OCI-LY7 (cell line): ENCODE measurements at regions of chr2 and their contacts with region 1.

Region 1: DNA sequence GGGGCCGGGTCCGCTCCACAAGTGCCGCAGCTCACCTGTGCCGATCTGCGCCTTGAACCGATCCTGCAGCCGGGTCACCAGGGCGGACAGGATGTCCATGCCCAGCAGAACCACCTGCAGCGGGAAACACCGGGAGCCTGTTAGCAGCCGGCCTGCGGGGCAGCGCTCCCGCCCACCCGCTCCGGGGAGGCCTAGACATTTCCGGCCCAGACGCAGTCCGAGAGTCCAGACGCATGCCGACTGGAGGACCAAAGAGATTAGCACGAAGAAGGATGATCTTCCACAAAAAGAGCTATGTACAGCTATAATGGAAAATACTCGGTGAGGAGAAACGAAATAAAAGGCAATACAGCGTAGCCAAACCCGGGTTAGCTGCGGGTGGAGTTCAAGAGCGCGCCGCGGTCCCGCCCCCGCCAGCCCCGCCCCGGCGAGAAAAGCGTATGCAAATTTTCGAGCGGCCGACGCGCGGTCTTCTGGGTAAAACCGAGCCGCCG is 421 bp upstream of the RNU4ATAC start:
- DNase-seq: peak; percentile 85
- H3K4me3 ChIP-seq: peak overlapping the region; percentile 92
- H3K27ac ChIP-seq: peak overlapping the region; percentile 94
- H3K4me1 ChIP-seq: peaks cover 37% of the 10 kb centered on the region
- CTCF ChIP-seq: no peak

Region 2: DNA sequence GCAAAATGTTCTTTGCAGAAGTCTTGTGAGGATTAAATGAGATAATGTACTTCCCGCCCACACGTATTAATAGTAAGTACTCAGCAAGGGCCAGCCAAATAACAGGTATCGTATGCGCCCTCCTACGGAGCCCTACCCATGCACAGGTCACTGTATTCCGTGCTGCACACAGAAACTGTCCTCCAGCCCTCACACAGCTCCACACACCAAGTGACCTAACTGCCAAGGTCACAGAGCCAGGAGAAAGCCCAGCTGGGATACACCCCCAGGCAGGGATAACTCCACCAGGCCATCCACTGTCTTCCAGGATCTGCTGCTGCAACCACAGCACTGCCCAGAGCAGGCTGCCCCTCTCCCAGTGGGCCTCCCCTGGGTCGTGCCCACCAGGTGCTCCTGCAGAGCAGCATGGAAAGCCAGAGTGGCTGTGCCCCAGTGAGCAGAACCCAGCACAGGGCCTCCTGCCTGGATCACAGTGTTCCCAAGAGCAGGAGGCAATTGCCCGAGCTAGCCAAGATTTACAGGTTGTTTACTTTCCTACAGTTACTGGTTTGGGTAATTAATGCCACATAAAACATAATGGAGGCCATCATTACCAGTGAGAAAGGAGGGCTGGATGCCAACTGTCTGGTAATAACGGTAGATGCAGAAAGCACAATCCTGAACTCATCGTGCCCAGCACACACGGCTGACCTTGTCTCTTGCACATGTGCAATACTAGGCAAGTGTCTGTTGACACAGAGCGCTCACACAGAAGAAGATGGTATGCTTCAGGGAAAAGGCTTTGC is 269.7 kb before region 1 on chr2:
- CTCF ChIA-PET with region 1: no interaction called
- POLR2A ChIA-PET with region 1: no interaction called
- intact Hi-C with region 1: no loop called
- DNase-seq: no peak
- H3K4me3 ChIP-seq: no peak overlapping the region
- H3K27ac ChIP-seq: no peak overlapping the region
- H3K4me1 ChIP-seq: no peaks in the 10 kb centered on the region
- CTCF ChIP-seq: no peak

Region 3: DNA sequence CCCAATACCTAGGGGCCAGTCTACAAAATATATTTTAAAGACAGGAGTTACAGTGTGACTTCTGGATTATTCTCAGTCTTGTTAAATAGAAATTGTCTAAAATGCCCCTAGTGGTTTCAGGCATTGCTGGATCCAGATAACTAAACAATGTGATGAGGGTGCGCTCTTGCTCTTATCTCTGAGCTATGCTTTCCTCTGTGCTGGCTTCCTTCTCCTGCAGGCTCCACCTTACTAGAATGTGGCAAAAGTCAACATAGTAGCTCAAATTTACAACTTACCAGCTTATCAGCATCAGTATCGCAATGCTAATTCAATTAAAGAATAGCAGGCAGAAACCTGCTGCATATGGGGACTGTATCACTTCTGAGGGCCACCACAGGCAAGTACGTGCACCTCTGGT is 60.9 kb before region 1 on chr2:
- CTCF ChIA-PET with region 1: no interaction called
- POLR2A ChIA-PET with region 1: no interaction called
- intact Hi-C with region 1: no loop called
- DNase-seq: no peak
- H3K4me3 ChIP-seq: no peak overlapping the region
- H3K27ac ChIP-seq: no peak overlapping the region
- H3K4me1 ChIP-seq: no peaks in the 10 kb centered on the region
- CTCF ChIP-seq: no peak

Region 4: DNA sequence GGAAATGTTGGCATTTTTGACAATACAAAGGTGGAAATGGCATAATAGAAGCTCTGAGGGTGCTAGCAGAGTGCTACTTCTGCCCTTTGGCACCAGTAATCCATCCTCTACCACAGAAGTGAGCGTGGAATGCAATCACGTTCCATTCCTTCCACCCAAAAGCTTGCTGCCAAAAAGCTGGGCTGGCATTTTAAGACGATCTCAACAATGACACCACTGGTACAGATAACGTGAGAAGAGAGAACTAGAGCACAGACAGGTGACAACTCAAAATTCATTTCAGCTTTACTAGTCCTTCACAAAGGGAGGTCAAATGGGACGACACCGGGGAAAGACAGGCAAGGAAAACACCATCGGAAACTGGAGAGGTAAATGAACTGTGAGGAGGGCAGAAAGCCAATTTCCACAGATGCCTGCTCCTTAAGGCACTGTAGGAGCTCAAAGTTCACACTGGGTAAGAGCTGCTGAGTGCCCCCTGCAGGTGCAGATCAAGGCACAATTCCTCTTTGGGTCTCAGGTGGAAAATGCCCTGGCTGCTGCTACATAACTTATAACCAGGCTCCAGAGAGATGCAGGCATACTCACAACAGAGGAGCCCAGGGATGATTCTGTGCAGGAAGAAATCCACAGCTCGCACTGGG is 50.3 kb before region 1 on chr2:
- CTCF ChIA-PET with region 1: no interaction called
- POLR2A ChIA-PET with region 1: no interaction called
- intact Hi-C with region 1: no loop called
- DNase-seq: peak; percentile 5
- H3K4me3 ChIP-seq: no peak overlapping the region
- H3K27ac ChIP-seq: no peak overlapping the region
- H3K4me1 ChIP-seq: peaks cover 8% of the 10 kb centered on the region
- CTCF ChIP-seq: peak; percentile 61

Region 5: DNA sequence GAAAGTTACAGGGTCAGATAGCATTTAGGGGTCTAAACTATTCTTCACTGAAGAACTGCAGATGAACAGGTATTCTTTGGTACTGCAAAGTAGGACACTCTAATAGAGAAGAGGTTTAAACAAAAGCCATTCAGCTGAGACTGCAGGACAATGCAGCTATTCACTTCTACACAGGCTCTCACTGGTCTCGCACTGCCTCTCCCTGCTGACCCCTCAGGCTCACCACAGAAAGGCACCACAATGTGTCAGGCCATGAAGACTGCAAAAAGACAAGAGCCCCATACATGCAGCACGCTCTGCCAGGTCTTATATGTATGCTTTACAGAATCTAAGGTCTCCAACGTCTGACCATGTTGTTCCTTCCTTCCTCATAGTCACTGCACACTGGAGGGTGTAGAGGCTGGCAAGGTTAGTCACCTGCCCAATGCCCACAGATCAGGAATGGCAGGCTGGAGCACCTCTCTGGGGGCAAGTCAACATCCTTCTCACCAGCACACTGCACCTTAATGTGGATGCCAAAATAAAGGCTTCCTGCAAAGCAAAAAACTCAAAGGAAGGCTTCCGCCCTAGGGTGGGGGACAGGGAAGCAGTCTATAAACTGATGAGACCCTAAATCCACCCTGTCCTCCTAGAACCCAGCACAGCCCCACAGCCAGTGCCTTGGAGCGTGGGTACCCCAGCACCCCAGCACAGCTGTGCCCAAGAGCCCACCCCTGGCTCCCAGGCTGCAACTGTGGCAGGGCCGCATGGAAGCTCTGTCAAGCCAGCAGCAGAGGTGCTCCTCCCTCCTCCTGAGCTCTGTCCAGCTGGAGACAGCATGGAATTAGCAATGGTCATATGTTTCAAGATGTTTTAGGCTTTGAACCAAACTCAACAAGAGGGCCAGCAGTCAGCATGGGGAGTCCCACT is 10.3 kb before region 1 on chr2:
- CTCF ChIA-PET with region 1: no interaction called
- POLR2A ChIA-PET with region 1: interaction called, 14 read pairs
- intact Hi-C with region 1: no loop called
- DNase-seq: no peak
- H3K4me3 ChIP-seq: no peak overlapping the region
- H3K27ac ChIP-seq: no peak overlapping the region
- H3K4me1 ChIP-seq: no peaks in the 10 kb centered on the region
- CTCF ChIP-seq: no peak

Region 6: GRCh38 chr2:121596221-121597080 is 66.2 kb after region 1 on chr2:
- CTCF ChIA-PET with region 1: interaction called, 5 read pairs
- POLR2A ChIA-PET with region 1: interaction called, 24 read pairs
- intact Hi-C with region 1: loop called (anchors 1 kb)
- DNase-seq: peak; percentile 80
- H3K4me3 ChIP-seq: peak overlapping the region; percentile 60
- H3K27ac ChIP-seq: peak overlapping the region; percentile 85
- H3K4me1 ChIP-seq: peaks cover 36% of the 10 kb centered on the region
- CTCF ChIP-seq: peak; percentile 84

Region 7: DNA sequence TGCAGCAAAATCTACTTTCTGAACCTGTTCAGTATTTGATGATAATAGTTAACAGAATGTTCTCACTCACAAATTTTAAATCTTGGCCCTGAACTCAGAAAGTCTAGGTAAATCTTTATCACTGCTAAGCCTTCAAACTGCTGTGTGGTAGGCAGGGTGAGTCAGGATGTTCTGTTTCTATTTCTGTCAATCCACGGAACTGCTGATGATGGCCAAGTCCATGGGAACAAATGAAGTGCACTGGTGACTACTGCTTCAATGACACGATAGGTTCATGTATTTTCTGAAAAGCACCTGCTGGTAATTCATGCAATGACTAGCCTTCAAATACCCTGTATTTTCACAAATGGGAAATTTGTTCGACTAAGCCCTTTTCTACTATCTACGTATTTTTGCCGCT is 192.2 kb after region 1 on chr2:
- CTCF ChIA-PET with region 1: no interaction called
- POLR2A ChIA-PET with region 1: interaction called, 3 read pairs
- intact Hi-C with region 1: loop called (anchors 1 kb)
- DNase-seq: no peak
- H3K4me3 ChIP-seq: no peak overlapping the region
- H3K27ac ChIP-seq: no peak overlapping the region
- H3K4me1 ChIP-seq: no peaks in the 10 kb centered on the region
- CTCF ChIP-seq: no peak